GM12878 (cell line): ENCODE measurements at regions of chr18 and their contacts with region 1.

Region 1: DNA sequence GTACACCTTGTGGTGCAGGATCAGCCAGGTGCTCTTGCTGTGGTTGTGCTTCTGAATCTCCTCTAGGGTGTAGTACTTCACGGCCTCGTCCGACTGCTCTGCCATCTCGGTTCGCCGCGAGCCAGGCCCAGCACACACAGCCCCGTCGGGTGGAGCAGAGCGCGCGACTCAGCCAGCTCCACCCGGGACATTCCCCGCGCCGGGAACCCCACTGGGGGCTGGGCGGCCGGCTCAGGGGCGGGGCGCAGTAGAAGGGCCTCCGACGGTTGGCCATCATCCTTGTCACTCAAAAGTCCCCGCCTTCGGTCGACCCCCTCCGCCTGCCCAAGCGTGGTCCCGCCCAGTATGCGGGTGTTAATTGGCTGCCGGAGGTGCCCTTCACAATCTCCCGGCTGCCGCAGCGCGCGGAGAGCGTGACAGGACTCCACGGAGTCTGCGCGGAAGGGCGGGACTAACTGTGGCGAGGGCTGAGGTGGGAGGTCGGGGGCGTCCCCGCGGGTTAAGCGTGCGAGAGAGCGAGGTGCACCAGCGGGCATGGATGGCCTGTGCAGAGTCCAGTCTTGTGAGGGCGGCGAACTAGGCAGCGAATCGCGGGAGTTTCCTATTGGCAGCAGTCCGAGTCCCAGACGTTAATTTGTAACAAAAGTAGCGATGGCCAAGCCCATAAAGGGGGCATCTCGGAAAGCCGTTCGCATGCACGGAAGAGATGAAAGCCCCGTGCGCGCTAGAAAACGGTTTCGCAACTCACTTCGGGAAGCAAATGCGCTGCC is at the start of gene CYB5A:
- DNase-seq: peak; percentile 87
- ATAC-seq: peak; percentile 99
- H3K4me3 ChIP-seq: peak within 1 kb of the TSS; percentile 68
- H3K27ac ChIP-seq: peak within 1 kb of the TSS; percentile 18; the same call in 1 of the 2 replicates
- H3K4me1 ChIP-seq: peaks cover 3% of the 10 kb centered on the region
- H3K27me3 ChIP-seq: no peaks in the 10 kb centered on the region
- CTCF ChIP-seq: no peak
- EP300 ChIP-seq: no peak
- POLR2A ChIP-seq: peak; percentile 83
- RAD21 ChIP-seq: no peak
- polyA plus RNA-seq, gene CYB5A: 120 to 129 TPM

Region 2: DNA sequence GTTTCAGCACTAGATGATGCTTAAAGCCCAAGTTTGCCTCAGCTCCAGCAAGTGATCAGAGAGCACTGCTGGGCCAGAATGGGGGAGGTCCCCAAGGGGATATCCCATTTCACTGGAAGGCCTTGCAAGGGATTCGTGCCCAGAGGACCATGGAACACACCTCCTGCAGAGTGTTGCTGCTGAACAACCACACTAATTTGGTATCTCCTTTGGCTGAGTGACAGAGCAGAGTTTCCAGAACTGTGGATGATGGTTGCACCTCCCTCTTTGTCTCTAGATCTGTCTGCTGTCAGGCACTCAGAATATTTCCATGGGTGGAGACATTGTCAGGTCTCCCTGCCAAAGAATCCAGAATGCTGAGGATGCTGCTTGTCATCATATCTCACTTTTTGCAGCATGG is 939.4 kb before region 1 on chr18:
- CTCF ChIA-PET with region 1: no interaction called
- POLR2A ChIA-PET with region 1: no interaction called
- RAD21 ChIA-PET with region 1: no interaction called
- SMC1A ChIA-PET with region 1: no interaction called
- in situ Hi-C with region 1: no loop called
- intact Hi-C with region 1: no loop called
- DNase-seq: no peak
- ATAC-seq: no peak
- H3K4me3 ChIP-seq: no peak overlapping the region
- H3K27ac ChIP-seq: no peak overlapping the region
- H3K4me1 ChIP-seq: no peaks in the 10 kb centered on the region
- H3K27me3 ChIP-seq: no peaks in the 10 kb centered on the region
- CTCF ChIP-seq: no peak
- EP300 ChIP-seq: no peak
- POLR2A ChIP-seq: no peak
- RAD21 ChIP-seq: no peak

Region 3: GRCh38 chr18:74147779-74148542 is 144.0 kb before region 1 on chr18 and contains the starts of genes FBXO15 and TIMM21:
- CTCF ChIA-PET with region 1: no interaction called
- POLR2A ChIA-PET with region 1: no interaction called
- RAD21 ChIA-PET with region 1: no interaction called
- SMC1A ChIA-PET with region 1: no interaction called
- in situ Hi-C with region 1: no loop called
- intact Hi-C with region 1: loop called (anchors 1 kb)
- DNase-seq: peak; percentile 94
- ATAC-seq: peak; percentile 93
- H3K4me3 ChIP-seq: peak within 1 kb of the TSS; percentile 92
- H3K27ac ChIP-seq: peak within 1 kb of the TSS; percentile 88
- H3K4me1 ChIP-seq: peaks cover 6% of the 10 kb centered on the region; the same call in 1 of the 2 replicates
- H3K27me3 ChIP-seq: no peaks in the 10 kb centered on the region
- CTCF ChIP-seq: no peak
- EP300 ChIP-seq: no peak
- POLR2A ChIP-seq: peak; percentile 77
- RAD21 ChIP-seq: no peak
- polyA plus RNA-seq, gene FBXO15: 0.20 to 0.24 TPM
- polyA plus RNA-seq, gene TIMM21: 111 to 136 TPM

Region 4: DNA sequence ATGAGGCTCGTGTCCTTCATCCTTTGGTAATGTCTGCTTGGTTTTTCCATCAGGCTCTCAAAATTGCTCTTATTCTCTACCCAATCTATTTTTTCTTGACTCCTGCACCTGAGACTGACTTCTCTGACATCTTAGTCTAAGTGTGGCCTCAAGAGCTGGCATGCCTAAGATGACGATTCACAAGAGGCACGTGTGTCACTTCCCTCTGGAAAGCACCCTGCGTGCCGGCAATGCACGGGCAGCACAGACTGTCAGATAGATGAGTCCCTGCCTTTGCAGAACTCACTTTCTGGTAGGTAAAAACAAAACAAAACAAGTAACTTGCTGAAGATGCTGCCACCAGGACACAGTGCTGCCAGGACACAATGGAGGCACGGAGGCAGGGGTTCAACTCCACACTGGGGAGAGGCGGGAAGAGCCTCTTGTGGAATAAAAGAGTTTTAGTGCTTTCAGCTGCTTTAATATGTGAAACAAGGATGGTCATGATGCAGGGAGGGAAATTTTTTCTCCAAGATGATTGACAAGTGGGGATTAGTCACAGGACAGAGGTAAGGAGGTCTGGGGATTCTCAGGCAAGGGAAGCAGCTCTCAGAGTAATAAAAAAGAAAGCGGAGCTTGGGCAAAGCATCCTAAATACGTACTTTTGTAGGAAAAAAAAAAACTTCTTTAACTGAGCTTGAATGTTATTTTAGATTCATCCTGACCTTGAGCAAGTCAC is 27.5 kb before region 1 on chr18:
- CTCF ChIA-PET with region 1: interaction called, 3 read pairs
- POLR2A ChIA-PET with region 1: interaction called, 5 read pairs
- RAD21 ChIA-PET with region 1: interaction called, 7 read pairs
- SMC1A ChIA-PET with region 1: interaction called, 4 read pairs
- in situ Hi-C with region 1: no loop called
- intact Hi-C with region 1: loop called (anchors 2 kb)
- DNase-seq: peak; percentile 47
- ATAC-seq: peak; percentile 100
- H3K4me3 ChIP-seq: no peak overlapping the region
- H3K27ac ChIP-seq: peak overlapping the region; percentile 63
- H3K4me1 ChIP-seq: no peaks in the 10 kb centered on the region
- H3K27me3 ChIP-seq: no peaks in the 10 kb centered on the region
- CTCF ChIP-seq: no peak
- EP300 ChIP-seq: peak in 1 of 2 experiments; percentile 37; a peak in 1 of 4 replicates
- POLR2A ChIP-seq: no peak
- RAD21 ChIP-seq: no peak

Region 5: DNA sequence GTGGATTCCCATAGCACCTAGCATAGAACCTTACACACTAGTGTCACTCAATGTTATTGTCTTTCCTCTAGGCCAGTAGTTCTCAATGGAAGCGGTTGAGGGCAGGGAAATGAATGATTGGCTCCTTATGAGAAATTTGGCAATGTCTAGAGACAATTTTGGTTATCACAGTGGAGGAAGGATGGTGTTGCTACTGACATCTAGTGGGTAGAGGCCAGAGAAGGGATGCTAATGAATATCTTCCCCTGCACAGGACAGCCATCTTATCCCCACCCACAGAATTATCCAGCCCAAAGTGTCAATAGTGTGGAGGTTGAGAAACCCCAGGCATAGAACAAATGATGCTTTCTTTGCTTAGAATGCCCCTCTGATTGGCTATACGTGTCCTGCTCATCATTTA is 39.4 kb after region 1 on chr18:
- CTCF ChIA-PET with region 1: no interaction called
- POLR2A ChIA-PET with region 1: no interaction called
- RAD21 ChIA-PET with region 1: no interaction called
- SMC1A ChIA-PET with region 1: no interaction called
- in situ Hi-C with region 1: no loop called
- intact Hi-C with region 1: no loop called
- DNase-seq: no peak
- ATAC-seq: peak; percentile 79
- H3K4me3 ChIP-seq: no peak overlapping the region
- H3K27ac ChIP-seq: no peak overlapping the region
- H3K4me1 ChIP-seq: peaks cover 5% of the 10 kb centered on the region
- H3K27me3 ChIP-seq: no peaks in the 10 kb centered on the region
- CTCF ChIP-seq: peak; percentile 32 to 39 (median 37); a peak in 5 of 6 replicates
- EP300 ChIP-seq: no peak
- POLR2A ChIP-seq: no peak
- RAD21 ChIP-seq: 0 out of 2 replicates have a peak, but pooled peaks have one; percentile 27

Region 6: GRCh38 chr18:74396171-74397169 is 104.5 kb after region 1 on chr18:
- CTCF ChIA-PET with region 1: no interaction called
- POLR2A ChIA-PET with region 1: no interaction called
- RAD21 ChIA-PET with region 1: no interaction called
- SMC1A ChIA-PET with region 1: no interaction called
- in situ Hi-C with region 1: no loop called
- intact Hi-C with region 1: no loop called
- DNase-seq: no peak
- ATAC-seq: no peak
- H3K4me3 ChIP-seq: no peak overlapping the region
- H3K27ac ChIP-seq: no peak overlapping the region
- H3K4me1 ChIP-seq: no peaks in the 10 kb centered on the region
- H3K27me3 ChIP-seq: peaks cover 5 to 9% of the 10 kb centered on the region in 2 experiments
- CTCF ChIP-seq: no peak
- EP300 ChIP-seq: no peak
- POLR2A ChIP-seq: no peak
- RAD21 ChIP-seq: no peak